ENCODE measurements at regions of chr7 and their contacts with region 1.

Region 1: DNA sequence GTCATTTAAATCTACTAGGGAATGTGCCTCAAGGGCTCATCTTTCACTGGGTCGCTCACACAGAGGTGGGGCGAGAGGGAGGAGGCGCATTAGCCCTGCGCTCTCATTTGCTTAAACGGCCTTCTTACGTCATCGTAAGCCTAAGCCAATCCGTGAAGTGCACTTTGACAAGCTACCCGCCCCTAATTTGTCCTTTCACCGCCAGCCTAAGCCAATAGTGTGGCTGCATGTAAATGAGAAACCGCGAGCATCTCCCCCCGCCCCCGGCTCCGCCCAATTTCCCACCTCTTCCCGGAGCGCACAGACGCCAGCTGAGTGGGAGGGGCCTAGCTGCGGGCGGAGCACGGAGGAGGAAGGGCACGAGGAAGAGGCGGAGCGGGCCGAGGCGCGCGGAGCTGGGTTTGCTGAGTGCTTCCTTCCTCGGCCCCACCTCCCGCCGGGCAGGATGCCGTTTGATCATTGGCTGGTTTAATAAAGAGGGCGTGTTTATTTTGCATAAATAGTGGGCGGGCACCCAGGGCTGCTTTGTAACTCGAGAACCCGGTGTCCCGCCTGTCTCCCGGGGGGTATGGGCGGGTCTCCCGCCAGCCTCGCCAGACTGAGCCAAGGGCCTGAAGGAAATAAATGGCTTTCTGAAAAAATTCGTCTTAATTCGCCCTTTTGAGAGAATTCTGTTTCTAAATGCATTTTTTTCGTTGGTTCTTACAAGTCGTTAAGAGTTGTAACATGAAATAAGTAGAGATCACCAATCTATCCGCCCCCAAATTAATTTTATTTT is 289.5 kb upstream of the NFE2L3 start:
- DNase-seq: peak; percentile 99
- ATAC-seq: peak; percentile 92
- H3K4me3 Mint-ChIP-seq: peak overlapping the region; percentile 78
- H3K27ac Mint-ChIP-seq: peak overlapping the region; percentile 85
- H3K4me1 Mint-ChIP-seq: peaks cover 41% of the 10 kb centered on the region
- H3K27me3 Mint-ChIP-seq: peaks cover 49% of the 10 kb centered on the region

Region 2: GRCh38 chr7:25851332-25852210 is 10.9 kb before region 1 on chr7:
- CTCF ChIA-PET with region 1: interaction called, 16 read pairs
- DNase-seq: peak; percentile 75
- ATAC-seq: peak; percentile 45
- H3K4me3 Mint-ChIP-seq: peak overlapping the region; percentile 41
- H3K27ac Mint-ChIP-seq: peak overlapping the region; percentile 6
- H3K4me1 Mint-ChIP-seq: peaks cover 27% of the 10 kb centered on the region
- H3K27me3 Mint-ChIP-seq: peaks cover 71% of the 10 kb centered on the region

Measured in activated CD8-positive, alpha-beta memory T cell treated with anti-CD3 and anti-CD28 coated beads, Interleukin-2, amount 10 ng/mL, durations not matched to agents 7 days and 5 days (primary cell).